ENCODE measurements at regions of chr1 and their contacts with region 1.

Region 1: DNA sequence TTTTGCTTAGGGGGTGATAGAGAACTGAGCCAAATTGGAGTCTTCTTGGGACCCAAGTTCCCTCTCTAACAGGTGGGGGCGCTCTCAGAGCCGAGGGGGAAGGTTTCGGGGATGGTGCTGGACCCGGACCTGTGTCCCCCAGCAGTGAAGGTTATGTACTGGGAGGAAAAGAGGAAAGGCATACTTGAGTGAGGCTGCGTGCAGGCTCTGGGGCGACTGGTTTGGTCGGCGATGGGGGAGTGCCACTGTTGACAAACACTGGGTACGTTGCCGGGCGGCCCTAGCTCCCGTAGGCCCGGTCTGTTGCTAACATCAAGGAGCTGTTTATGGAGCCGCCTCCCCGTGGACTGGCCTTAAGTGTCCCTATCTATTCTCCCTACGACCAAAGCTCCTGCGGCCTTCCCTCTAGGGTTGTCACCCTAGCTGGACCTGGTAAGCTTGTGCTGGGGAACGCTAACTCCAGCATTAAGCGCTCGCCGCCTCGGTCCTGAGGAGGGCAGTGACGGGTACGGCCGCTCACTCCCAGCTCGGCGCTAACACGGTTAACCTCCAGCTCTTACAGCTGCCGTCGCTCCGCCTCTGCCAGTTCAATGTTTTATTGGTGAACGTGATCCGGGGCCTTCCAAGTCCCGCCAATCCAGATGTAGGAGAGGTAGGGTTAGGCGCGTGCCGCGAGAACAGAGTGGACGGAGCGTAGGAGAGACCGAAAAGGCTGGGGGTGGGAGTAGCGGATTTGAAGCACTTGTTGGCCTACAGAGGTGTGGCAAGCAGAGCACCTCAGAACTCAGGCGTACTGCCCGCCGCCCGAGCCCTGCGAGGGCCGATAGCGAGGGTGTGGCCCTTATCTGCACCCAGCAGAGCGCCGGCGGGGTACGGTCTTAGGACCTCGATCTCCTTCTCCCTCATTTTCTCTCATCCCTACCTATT is at the start of gene PPOX:
- DNase-seq: peak; percentile 96 to 98
- H3K4me3 ChIP-seq: peak within 1 kb of the TSS; percentile 88
- H3K4me3 Mint-ChIP-seq: peak within 1 kb of the TSS; percentile 83
- H3K27ac Mint-ChIP-seq: peak within 1 kb of the TSS; percentile 81
- H3K4me1 ChIP-seq: peaks cover 3% of the 10 kb centered on the region; the same call in 1 of the 2 replicates
- H3K4me1 Mint-ChIP-seq: no peaks in the 10 kb centered on the region
- H3K27me3 ChIP-seq: no peaks in the 10 kb centered on the region
- H3K27me3 Mint-ChIP-seq: no peaks in the 10 kb centered on the region
- CTCF ChIP-seq: peak in 1 of 2 experiments; percentile 55
- total RNA-seq, gene PPOX: 25.0 and 25.4 TPM in 2 replicates

Region 2: GRCh38 chr1:161153679-161154426 is 12.2 kb before region 1 on chr1 and contains the start of gene UFC1:
- CTCF ChIA-PET with region 1: interaction called, 10 read pairs
- POLR2A ChIA-PET with region 1: interaction called, 8 read pairs
- intact Hi-C with region 1: no loop called
- DNase-seq: peak; percentile 85 to 88
- H3K4me3 ChIP-seq: peak within 1 kb of the TSS; percentile 77
- H3K4me3 Mint-ChIP-seq: peak within 1 kb of the TSS; percentile 95
- H3K27ac Mint-ChIP-seq: peak within 1 kb of the TSS; percentile 99
- H3K4me1 ChIP-seq: 0 out of 2 replicates have a peak, but pooled peaks cover 2% of the 10 kb centered on the region
- H3K4me1 Mint-ChIP-seq: peaks cover 12% of the 10 kb centered on the region
- H3K27me3 ChIP-seq: no peaks in the 10 kb centered on the region
- H3K27me3 Mint-ChIP-seq: no peaks in the 10 kb centered on the region
- CTCF ChIP-seq: no peak
- total RNA-seq, gene UFC1: 98.2 and 105 TPM in 2 replicates

Region 3: GRCh38 chr1:161201828-161202725 is 36.1 kb after region 1 on chr1 and contains the start of gene NDUFS2:
- CTCF ChIA-PET with region 1: interaction called, 3 read pairs
- POLR2A ChIA-PET with region 1: interaction called, 11 read pairs
- intact Hi-C with region 1: no loop called
- DNase-seq: peak; percentile 95 to 98
- H3K4me3 ChIP-seq: peak within 1 kb of the TSS; percentile 58
- H3K4me3 Mint-ChIP-seq: peak within 1 kb of the TSS; percentile 83
- H3K27ac Mint-ChIP-seq: peak within 1 kb of the TSS; percentile 85
- H3K4me1 ChIP-seq: peaks cover 13% of the 10 kb centered on the region; the same call in 1 of the 2 replicates
- H3K4me1 Mint-ChIP-seq: peaks cover 20% of the 10 kb centered on the region
- H3K27me3 ChIP-seq: no peaks in the 10 kb centered on the region
- H3K27me3 Mint-ChIP-seq: no peaks in the 10 kb centered on the region
- CTCF ChIP-seq: peak in 1 of 2 experiments; percentile 61
- total RNA-seq, gene NDUFS2: 110 and 115 TPM in 2 replicates

Measured in Caco-2 (cell line).